ENCODE measurements at regions of chrX and their contacts with region 1.

Region 1: DNA sequence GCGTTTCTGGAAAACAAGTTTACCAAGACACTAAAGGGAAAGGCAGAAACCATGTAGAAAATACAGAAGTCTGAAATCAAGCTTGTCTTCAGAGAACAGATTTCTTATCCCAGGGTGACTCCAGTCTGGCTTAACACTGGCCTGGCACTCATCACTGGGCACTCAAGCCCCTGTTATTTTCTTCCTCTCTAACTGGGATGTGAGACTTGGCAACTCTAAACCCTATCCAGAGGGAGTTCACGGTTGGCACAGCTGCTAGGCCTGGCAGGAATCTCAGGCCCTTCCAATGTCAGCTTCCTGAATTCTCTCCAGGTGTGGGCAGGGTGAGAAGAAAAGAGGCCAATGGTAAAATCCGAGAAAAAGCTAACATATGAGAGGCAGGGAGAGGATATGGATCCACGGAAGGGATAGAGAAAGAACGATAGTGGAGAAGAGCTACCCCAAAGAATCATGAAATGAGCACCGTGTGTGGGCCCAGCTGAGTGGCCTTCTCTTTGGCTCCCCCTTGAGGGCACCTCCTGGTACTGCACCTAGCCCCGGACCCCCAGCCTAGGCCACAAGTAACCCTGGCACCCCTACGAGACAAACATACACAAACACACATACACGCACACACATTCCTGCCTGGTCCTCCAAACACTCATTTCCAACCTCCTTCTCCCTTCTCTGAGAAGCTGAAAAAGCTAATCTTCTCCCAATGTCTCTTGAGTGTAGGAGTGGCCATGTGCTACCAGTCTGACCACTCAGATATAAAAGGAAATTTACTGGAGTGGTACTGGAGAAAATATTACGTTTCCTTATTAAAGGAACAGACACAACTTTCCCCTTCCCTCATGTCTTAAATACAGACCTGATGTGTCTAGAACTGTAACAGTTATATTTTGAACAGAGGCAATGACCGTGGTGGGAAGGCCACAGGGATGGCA is 16.6 kb upstream of the PTCHD1 start:
- DNase-seq: no peak
- H3K4me3 ChIP-seq: no peak overlapping the region
- H3K27ac ChIP-seq: no peak overlapping the region
- H3K4me1 ChIP-seq: no peaks in the 10 kb centered on the region
- H3K27me3 ChIP-seq: no peaks in the 10 kb centered on the region
- CTCF ChIP-seq: peak; percentile 11 to 50 (median 39)
- POLR2A ChIP-seq: no peak

Region 2: DNA sequence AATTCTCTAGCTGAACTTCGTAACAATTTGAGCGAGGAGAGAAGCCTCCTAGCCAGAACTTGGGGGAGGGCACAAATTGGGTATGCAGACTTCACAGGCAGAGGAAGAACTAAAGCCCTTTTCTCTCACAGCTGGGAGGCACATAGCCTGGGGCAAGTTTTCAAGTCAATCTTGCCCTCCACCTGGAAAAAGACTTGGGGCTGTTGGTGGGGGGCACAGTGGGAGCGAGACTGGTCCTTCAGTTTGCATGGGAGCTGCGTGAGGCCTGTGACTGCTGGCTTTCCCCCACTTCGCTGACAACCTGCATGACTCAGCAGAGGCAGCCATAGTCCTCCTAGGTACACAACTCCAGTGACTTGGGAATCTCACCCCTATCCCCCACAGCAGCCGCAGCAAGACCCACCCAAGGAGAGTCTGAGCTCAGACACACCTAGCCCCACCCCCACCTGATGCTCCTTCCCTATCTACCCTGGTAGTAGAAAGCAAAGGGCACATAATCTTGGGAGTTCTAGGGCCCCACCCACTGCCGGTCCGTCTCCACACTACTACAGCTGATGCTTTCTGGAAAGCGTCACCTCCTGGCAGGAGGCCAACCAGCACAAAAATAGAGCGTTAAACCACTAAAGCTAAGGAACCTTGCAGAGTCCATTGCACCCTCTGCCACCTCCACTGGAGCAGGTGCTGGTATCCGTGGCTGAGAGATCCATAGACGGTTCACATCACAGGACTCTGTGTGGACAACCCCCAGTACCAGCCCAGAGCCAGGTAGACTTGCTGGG is 884.6 kb before region 1 on chrX:
- intact Hi-C with region 1: no loop called
- DNase-seq: no peak
- H3K4me3 ChIP-seq: no peak overlapping the region
- H3K27ac ChIP-seq: no peak overlapping the region
- H3K4me1 ChIP-seq: no peaks in the 10 kb centered on the region
- H3K27me3 ChIP-seq: no peaks in the 10 kb centered on the region
- CTCF ChIP-seq: no peak
- POLR2A ChIP-seq: no peak

Region 3: DNA sequence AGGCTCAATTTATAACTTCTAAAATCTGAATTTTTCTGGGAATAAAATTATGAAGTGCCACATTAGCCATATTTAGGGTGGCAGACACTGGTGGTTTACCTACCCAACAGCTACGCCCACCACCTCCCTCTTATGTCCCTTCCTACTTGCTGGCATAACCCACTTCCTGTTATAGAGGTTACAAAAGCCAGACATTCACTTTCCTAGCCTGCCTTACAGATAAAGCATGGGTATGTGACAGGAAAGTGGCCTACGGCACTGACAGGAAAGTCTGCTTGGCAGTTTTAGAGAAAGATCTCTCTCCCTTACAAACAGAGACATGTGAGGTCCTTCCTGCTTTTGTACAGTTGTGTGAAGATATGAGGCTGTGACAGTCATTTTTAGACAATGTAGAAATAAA is 305.9 kb before region 1 on chrX:
- intact Hi-C with region 1: loop called (anchors 10 kb)
- DNase-seq: no peak
- H3K4me3 ChIP-seq: no peak overlapping the region
- H3K27ac ChIP-seq: no peak overlapping the region
- H3K4me1 ChIP-seq: no peaks in the 10 kb centered on the region
- H3K27me3 ChIP-seq: no peaks in the 10 kb centered on the region
- CTCF ChIP-seq: no peak
- POLR2A ChIP-seq: no peak

Region 4: GRCh38 chrX:24259544-24260240 is 941.6 kb after region 1 on chrX:
- intact Hi-C with region 1: no loop called
- DNase-seq: peak; percentile 20
- H3K4me3 ChIP-seq: no peak overlapping the region
- H3K27ac ChIP-seq: no peak overlapping the region
- H3K4me1 ChIP-seq: no peaks in the 10 kb centered on the region
- H3K27me3 ChIP-seq: no peaks in the 10 kb centered on the region
- CTCF ChIP-seq: peak in 3 of 4 experiments; percentile 24 to 49 (median 30)
- POLR2A ChIP-seq: no peak